ENCODE measurements at regions of chr15 and their contacts with region 1.

Region 1: DNA sequence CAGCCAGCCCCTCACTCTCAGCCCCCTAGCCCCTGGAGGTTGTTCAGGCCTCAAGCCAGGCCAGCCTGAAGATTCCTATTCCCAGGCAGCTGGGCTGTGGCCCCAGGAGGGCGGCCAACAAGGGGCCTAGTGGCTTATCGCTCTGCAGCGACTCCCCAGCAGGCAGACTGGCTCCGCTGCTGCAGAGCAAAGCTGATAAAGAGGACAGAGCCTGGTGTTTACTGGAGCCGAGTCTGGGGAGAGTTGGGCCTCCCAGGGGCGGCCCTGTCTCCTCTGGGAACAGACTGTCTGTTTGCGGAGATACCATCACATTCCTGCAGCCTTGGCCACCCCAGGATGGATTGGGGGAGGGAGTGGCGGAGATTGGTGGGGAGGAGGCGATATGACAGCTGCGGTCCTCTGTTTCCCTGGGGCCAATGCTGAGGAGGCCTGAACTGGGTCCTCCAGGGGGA is 22.4 kb upstream of the SMAD6 start:
- DNase-seq: no peak
- H3K4me3 ChIP-seq: no peak overlapping the region
- H3K27ac ChIP-seq: no peak overlapping the region
- H3K4me1 ChIP-seq: no peaks in the 10 kb centered on the region
- H3K27me3 ChIP-seq: no peaks in the 10 kb centered on the region
- CTCF ChIP-seq: no peak

Region 2: DNA sequence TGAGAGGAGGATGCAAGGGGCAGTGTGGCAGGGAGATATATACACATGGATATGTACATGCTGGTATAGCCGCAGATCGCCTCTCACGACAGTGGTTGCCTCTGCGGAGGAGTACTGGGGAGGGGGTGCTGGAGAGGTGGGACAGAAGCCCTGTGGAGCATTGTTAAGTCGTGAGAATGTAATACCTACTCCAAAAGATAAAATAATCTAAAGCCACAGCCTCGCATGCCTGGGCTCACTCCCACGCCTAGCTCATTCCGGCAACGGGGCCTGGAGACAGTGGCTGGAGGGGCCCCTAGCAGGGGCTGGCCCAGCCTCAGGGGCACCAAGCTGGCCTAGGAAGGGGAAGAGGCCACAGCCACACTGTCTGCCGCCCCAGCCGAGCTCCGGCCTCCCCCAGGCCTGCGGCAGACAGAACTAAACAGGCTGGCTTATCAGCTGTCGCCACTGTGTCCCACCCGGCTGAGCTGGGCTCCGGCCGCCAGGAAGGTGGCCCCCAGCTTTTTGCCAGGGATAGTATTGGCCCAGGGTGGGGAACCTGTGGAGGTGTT is 48.8 kb before region 1 on chr15:
- CTCF ChIA-PET with region 1: no interaction called
- dilution Hi-C with region 1: loop called (anchors 5 kb)
- in situ Hi-C with region 1: no loop called
- intact Hi-C with region 1: no loop called
- DNase-seq: no peak
- H3K4me3 ChIP-seq: no peak overlapping the region
- H3K27ac ChIP-seq: no peak overlapping the region
- H3K4me1 ChIP-seq: no peaks in the 10 kb centered on the region
- H3K27me3 ChIP-seq: no peaks in the 10 kb centered on the region
- CTCF ChIP-seq: no peak

Region 3: GRCh38 chr15:66765478-66766281 is 86.0 kb after region 1 on chr15:
- CTCF ChIA-PET with region 1: no interaction called
- dilution Hi-C with region 1: loop called (anchors 5 kb)
- in situ Hi-C with region 1: no loop called
- intact Hi-C with region 1: no loop called
- DNase-seq: peak; percentile 86
- H3K4me3 ChIP-seq: no peak overlapping the region
- H3K27ac ChIP-seq: no peak overlapping the region
- H3K4me1 ChIP-seq: peaks cover 46% of the 10 kb centered on the region
- H3K27me3 ChIP-seq: no peaks in the 10 kb centered on the region
- CTCF ChIP-seq: no peak

Measured in mammary epithelial cell (primary cell).